Activated T-helper 2 cell treated with anti-CD3 and anti-CD28 coated beads, Interferon-gamma antibody, Interleukin-2, Interleukin-4, amounts not matched to agents 10 μg/mL and 5 μg/mL and 100 μg/mL, durations not matched to agents 14 hours and 24 hours and 36 hours (primary cell): ENCODE measurements at regions of chr16 and their contacts with region 1.

Region 1: GRCh38 chr16:24189941-24190340 is 66.2 kb upstream of the CACNG3 start:
- DNase-seq: no peak
- H3K4me3 Mint-ChIP-seq: peak overlapping the region; percentile 27
- H3K27ac Mint-ChIP-seq: peak overlapping the region; percentile 97
- H3K4me1 Mint-ChIP-seq: peaks cover 44% of the 10 kb centered on the region
- H3K27me3 Mint-ChIP-seq: no peaks in the 10 kb centered on the region

Region 2: GRCh38 chr16:23823475-23824384 is 366.2 kb before region 1 on chr16:
- intact Hi-C with region 1: no loop called
- DNase-seq: no peak
- H3K4me3 Mint-ChIP-seq: no peak overlapping the region
- H3K27ac Mint-ChIP-seq: peak overlapping the region; percentile 40
- H3K4me1 Mint-ChIP-seq: peaks cover 35% of the 10 kb centered on the region
- H3K27me3 Mint-ChIP-seq: peaks cover 6% of the 10 kb centered on the region

Region 3: GRCh38 chr16:23842137-23842600 is 347.8 kb before region 1 on chr16:
- intact Hi-C with region 1: loop called (anchors 5 kb)
- DNase-seq: peak; percentile 25
- H3K4me3 Mint-ChIP-seq: peak overlapping the region; percentile 27
- H3K27ac Mint-ChIP-seq: peak overlapping the region; percentile 88
- H3K4me1 Mint-ChIP-seq: peaks cover 80% of the 10 kb centered on the region
- H3K27me3 Mint-ChIP-seq: no peaks in the 10 kb centered on the region

Region 4: DNA sequence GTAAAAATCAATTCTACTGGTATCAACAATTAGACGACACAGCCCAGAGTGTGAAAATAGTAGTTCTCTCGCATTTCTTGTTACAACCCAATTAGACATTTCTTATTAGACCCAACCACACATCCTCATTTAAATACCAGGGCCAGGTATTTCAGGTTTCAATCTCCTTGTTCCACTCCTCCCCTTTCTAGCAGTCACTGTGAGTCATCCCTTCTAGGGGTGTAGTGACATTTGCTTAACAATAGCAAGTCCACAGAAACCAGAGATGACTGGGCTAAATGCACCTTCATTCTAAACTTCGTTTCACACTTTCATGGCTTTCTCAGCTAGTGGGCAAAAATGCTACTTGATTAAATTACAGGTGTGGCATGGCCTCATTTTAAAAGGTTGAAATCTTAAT is 50.7 kb before region 1 on chr16:
- intact Hi-C with region 1: loop called (anchors 5 kb)
- DNase-seq: no peak
- H3K4me3 Mint-ChIP-seq: no peak overlapping the region
- H3K27ac Mint-ChIP-seq: peak overlapping the region; percentile 40
- H3K4me1 Mint-ChIP-seq: peaks cover 18% of the 10 kb centered on the region
- H3K27me3 Mint-ChIP-seq: no peaks in the 10 kb centered on the region

Region 5: GRCh38 chr16:24228514-24228913 is 38.6 kb after region 1 on chr16:
- intact Hi-C with region 1: loop called (anchors 5 kb)
- DNase-seq: no peak
- H3K4me3 Mint-ChIP-seq: no peak overlapping the region
- H3K27ac Mint-ChIP-seq: no peak overlapping the region
- H3K4me1 Mint-ChIP-seq: no peaks in the 10 kb centered on the region
- H3K27me3 Mint-ChIP-seq: no peaks in the 10 kb centered on the region

Region 6: GRCh38 chr16:24668481-24669061 is 478.6 kb after region 1 on chr16:
- intact Hi-C with region 1: loop called (anchors 2 kb)
- DNase-seq: no peak
- H3K4me3 Mint-ChIP-seq: peak overlapping the region; percentile 46
- H3K27ac Mint-ChIP-seq: peak overlapping the region; percentile 93
- H3K4me1 Mint-ChIP-seq: peaks cover 26% of the 10 kb centered on the region
- H3K27me3 Mint-ChIP-seq: no peaks in the 10 kb centered on the region